ENCODE measurements at regions of chr4 and their contacts with region 1.

Region 1: GRCh38 chr4:145609481-145610427 is 9.4 kb upstream of the MMAA start:
- DNase-seq: peak in 1 of 2 experiments; percentile 76
- H3K4me3 ChIP-seq: no peak overlapping the region
- H3K27ac ChIP-seq: no peak overlapping the region
- H3K4me1 ChIP-seq: no peaks in the 10 kb centered on the region
- H3K27me3 ChIP-seq: no peaks in the 10 kb centered on the region
- CTCF ChIP-seq: peak in 2 of 3 experiments; percentile 74; a peak in 3 of 4 replicates
- EP300 ChIP-seq: no peak
- POLR2A ChIP-seq: no peak
- RAD21 ChIP-seq: peak; percentile 90 to 91

Region 2: DNA sequence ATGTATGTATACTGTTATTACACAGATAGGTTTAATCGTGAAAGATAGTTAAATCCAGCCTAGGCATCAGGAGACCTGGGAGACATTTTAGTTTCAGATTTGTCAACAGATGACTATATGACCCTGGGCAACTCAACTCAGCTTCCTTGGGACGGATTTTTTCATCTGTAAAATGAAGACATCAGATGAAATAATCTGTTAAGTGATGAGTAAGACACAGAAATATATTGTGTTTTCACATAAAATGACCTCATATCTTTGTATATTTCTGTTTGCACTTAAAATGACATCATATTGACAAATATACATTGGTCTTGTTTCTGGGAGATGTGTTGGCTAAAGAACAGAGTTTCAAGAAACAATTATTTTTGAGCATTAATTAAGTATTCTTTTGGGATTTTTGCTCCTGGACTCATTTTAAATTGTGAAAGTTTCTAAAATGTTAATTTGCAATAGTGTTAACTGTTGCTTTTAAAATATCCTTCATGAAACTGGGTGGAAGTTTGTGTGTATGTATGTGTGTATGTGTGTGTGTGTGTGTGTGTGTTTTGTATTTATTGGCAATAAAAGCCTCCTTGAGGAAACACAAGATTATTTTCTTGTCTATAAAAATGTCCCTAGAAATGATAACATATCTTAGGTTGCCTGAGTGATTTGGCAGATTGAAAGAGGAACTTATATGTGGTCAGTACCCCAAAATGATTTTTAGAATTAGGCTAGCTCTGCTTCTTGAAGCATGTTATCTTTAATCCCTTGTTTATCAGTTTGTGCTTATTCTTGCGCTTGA is 19.6 kb before region 1 on chr4:
- CTCF ChIA-PET with region 1: interaction called, 10 read pairs
- POLR2A ChIA-PET with region 1: no interaction called
- DNase-seq: no peak
- H3K4me3 ChIP-seq: no peak overlapping the region
- H3K27ac ChIP-seq: no peak overlapping the region
- H3K4me1 ChIP-seq: no peaks in the 10 kb centered on the region
- H3K27me3 ChIP-seq: no peaks in the 10 kb centered on the region; a peak in 1 of 7 replicates
- CTCF ChIP-seq: no peak
- EP300 ChIP-seq: no peak
- POLR2A ChIP-seq: no peak
- RAD21 ChIP-seq: no peak

Region 3: GRCh38 chr4:145694929-145695328 is 85.2 kb after region 1 on chr4:
- CTCF ChIA-PET with region 1: no interaction called
- POLR2A ChIA-PET with region 1: no interaction called
- DNase-seq: no peak
- H3K4me3 ChIP-seq: no peak overlapping the region
- H3K27ac ChIP-seq: no peak overlapping the region
- H3K4me1 ChIP-seq: no peaks in the 10 kb centered on the region
- H3K27me3 ChIP-seq: no peaks in the 10 kb centered on the region
- CTCF ChIP-seq: no peak
- EP300 ChIP-seq: no peak
- POLR2A ChIP-seq: no peak
- RAD21 ChIP-seq: no peak